ENCODE measurements at regions of chr10 and their contacts with region 1.

Region 1: DNA sequence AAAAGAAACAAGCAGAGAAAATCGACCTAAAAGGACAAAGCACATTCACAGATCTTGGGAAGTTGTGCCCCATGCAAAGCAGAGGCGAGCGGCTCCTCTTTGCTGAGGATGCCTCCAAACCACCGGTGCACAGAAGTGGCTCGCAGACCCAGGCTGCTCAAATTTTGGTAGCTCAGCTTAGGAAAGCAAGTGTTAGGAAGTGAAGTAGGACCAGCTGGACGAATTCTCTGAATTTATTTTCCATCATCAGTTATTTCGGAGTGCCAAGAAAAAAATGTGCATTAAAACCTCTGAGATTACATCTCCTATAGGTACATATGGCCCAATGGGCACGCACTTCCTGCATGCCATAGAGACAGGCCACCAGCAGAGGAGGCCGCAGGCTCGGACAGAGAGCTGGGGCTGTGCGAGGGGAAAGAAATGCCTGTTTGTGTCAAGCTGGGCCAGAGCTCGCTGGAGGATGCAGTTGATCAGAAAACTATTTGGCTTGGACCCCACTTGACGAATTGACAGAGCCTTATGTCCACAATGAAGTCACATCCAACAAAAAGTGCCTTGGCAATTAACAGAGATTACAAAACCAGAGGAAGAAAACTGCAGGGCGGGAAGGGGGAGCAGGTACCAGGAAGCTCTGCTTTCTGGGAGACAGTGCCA is 122.3 kb upstream of the LYZL2 start:
- DNase-seq: no peak
- H3K4me3 ChIP-seq: no peak overlapping the region
- H3K27ac ChIP-seq: no peak overlapping the region
- H3K4me1 ChIP-seq: no peaks in the 10 kb centered on the region
- H3K27me3 ChIP-seq: no peaks in the 10 kb centered on the region
- CTCF ChIP-seq: peak; percentile 85 to 87

Region 2: GRCh38 chr10:30656233-30656632 is 95.6 kb before region 1 on chr10:
- CTCF ChIA-PET with region 1: no interaction called
- dilution Hi-C with region 1: no loop called
- in situ Hi-C with region 1: no loop called
- intact Hi-C with region 1: no loop called
- DNase-seq: no peak
- H3K4me3 ChIP-seq: no peak overlapping the region
- H3K27ac ChIP-seq: no peak overlapping the region
- H3K4me1 ChIP-seq: no peaks in the 10 kb centered on the region
- H3K27me3 ChIP-seq: peaks cover 4% of the 10 kb centered on the region
- CTCF ChIP-seq: no peak

Region 3: GRCh38 chr10:30775779-30776591 is 24.2 kb after region 1 on chr10:
- CTCF ChIA-PET with region 1: no interaction called
- dilution Hi-C with region 1: no loop called
- in situ Hi-C with region 1: no loop called
- intact Hi-C with region 1: no loop called
- DNase-seq: peak; percentile 21
- H3K4me3 ChIP-seq: no peak overlapping the region
- H3K27ac ChIP-seq: no peak overlapping the region
- H3K4me1 ChIP-seq: no peaks in the 10 kb centered on the region
- H3K27me3 ChIP-seq: no peaks in the 10 kb centered on the region
- CTCF ChIP-seq: no peak

Region 4: DNA sequence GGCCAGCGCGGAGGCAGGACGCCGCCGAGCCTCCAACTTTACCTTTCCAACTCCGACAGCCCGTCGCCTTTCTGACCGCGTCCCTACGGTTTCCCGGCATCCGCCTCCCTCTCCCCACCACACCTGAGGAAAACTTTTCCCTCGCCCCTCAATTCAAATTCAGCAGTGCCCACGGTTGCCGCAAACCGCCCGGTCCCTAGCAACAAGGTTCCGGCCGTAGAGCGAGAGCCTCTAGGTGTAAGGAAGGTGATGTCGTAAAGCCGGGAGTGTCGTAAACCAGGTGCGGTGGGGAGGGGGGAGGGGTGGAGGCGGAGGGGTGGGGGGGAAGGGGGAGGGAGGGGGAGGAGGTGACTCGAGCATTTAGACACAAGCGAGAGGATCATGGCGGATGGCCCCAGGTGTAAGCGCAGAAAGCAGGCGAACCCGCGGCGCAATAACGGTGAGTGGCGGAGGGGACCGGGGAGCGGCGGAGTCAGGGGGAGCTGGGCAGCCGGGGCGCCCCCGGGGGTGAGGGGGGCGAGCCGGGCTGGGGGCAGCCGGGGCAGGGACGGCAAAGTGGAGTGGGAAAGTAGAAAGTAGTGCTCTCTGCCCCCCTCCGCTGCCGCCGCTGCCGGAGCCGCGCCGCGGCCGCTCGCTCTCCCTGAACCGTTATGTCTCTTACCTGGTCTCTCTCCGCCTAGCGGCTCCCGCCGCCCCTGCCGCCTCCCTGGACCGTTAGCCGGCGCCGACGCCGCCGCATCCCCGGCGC is 567.2 kb after region 1 on chr10 and contains the start of gene ZEB1:
- CTCF ChIA-PET with region 1: no interaction called
- dilution Hi-C with region 1: no loop called
- in situ Hi-C with region 1: no loop called
- intact Hi-C with region 1: loop called (anchors 10 kb)
- DNase-seq: peak; percentile 86
- H3K4me3 ChIP-seq: peak within 1 kb of the TSS; percentile 76 to 98 (median 98)
- H3K27ac ChIP-seq: peak within 1 kb of the TSS; percentile 72
- H3K4me1 ChIP-seq: peaks cover 21% of the 10 kb centered on the region
- H3K27me3 ChIP-seq: peaks cover 26% of the 10 kb centered on the region
- CTCF ChIP-seq: peak; percentile 12 to 54
- total RNA-seq, gene ZEB1: 1.2 to 1.3 TPM

Region 5: GRCh38 chr10:31467796-31468535 is 716.2 kb after region 1 on chr10:
- CTCF ChIA-PET with region 1: interaction called, 4 read pairs
- dilution Hi-C with region 1: no loop called
- in situ Hi-C with region 1: no loop called
- intact Hi-C with region 1: loop called (anchors 1 kb)
- DNase-seq: peak; percentile 47
- H3K4me3 ChIP-seq: no peak overlapping the region
- H3K27ac ChIP-seq: no peak overlapping the region
- H3K4me1 ChIP-seq: no peaks in the 10 kb centered on the region
- H3K27me3 ChIP-seq: no peaks in the 10 kb centered on the region
- CTCF ChIP-seq: peak; percentile 94 to 99

Region 6: DNA sequence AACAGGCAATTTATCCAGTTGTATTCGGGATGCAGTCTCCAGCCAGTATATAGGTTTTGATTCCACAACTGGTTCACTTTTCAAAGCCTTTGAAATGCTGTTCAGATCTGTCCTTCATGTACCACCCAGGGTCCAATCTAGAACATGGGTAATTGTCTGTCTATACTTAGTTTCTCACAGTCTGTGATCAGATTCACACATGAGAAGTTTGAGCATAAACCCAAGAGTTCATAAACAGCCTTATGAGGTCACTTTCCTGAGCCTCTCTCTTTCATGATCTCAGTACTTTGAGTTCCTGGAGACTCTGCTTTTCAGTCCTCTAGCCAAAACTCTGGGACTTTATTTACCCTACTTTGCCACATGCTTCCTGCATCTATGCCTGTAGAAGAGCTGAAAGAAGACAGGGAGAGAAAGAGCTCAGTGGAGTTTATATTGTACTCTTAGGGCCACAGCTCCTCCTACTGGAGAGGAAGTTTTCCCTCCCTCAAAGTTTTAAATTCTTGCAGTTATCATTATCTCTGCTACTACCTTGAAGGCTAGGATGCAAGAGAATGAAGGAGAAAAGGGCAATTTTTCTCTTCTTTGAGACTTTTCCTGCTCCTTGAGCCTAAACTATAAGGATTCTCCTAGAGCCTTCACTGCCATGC is 739.2 kb after region 1 on chr10:
- CTCF ChIA-PET with region 1: interaction called, 12 read pairs
- dilution Hi-C with region 1: no loop called
- in situ Hi-C with region 1: loop called (anchors 25 kb)
- intact Hi-C with region 1: loop called (anchors 1 kb)
- DNase-seq: peak; percentile 29
- H3K4me3 ChIP-seq: no peak overlapping the region
- H3K27ac ChIP-seq: no peak overlapping the region
- H3K4me1 ChIP-seq: no peaks in the 10 kb centered on the region
- H3K27me3 ChIP-seq: peaks cover 5% of the 10 kb centered on the region
- CTCF ChIP-seq: peak; percentile 72 to 79

Region 7: GRCh38 chr10:31707093-31708039 is 955.6 kb after region 1 on chr10:
- CTCF ChIA-PET with region 1: no interaction called
- dilution Hi-C with region 1: no loop called
- in situ Hi-C with region 1: no loop called
- intact Hi-C with region 1: loop called (anchors 10 kb)
- DNase-seq: peak; percentile 32
- H3K4me3 ChIP-seq: no peak overlapping the region
- H3K27ac ChIP-seq: no peak overlapping the region
- H3K4me1 ChIP-seq: no peaks in the 10 kb centered on the region
- H3K27me3 ChIP-seq: no peaks in the 10 kb centered on the region
- CTCF ChIP-seq: no peak

Measured in mammary epithelial cell (primary cell).